Heart right ventricle (tissue), 16 donors: ENCODE measurements at regions of chr1 and their contacts with region 1.

Region 1: GRCh38 chr1:231512147-231512698 is 16.2 kb upstream of the TSNAX start:
- DNase-seq: no peak
- ATAC-seq: no peak
- H3K4me3 ChIP-seq: no peak overlapping the region
- H3K27ac ChIP-seq: no peak overlapping the region
- H3K4me1 ChIP-seq: peaks cover 0 to 27% (median 0%) of the 10 kb centered on the region in 9 donors
- H3K27me3 ChIP-seq: no peaks in the 10 kb centered on the region
- CTCF ChIP-seq: no peak

Region 2: GRCh38 chr1:231351816-231352215 is 160.4 kb before region 1 on chr1:
- intact Hi-C with region 1: no loop called
- DNase-seq: no peak
- ATAC-seq: peak in 2 of 8 donors; percentile 41 to 55
- H3K4me3 ChIP-seq: no peak overlapping the region
- H3K27ac ChIP-seq: peak overlapping the region in 9 of 10 donors; percentile 13 to 70 (median 30)
- H3K4me1 ChIP-seq: peaks cover 0 to 23% (median 5%) of the 10 kb centered on the region in 9 donors
- H3K27me3 ChIP-seq: no peaks in the 10 kb centered on the region
- CTCF ChIP-seq: no peak

Region 3: GRCh38 chr1:231442735-231443134 is 69.5 kb before region 1 on chr1:
- intact Hi-C with region 1: loop called in 1 of 10 experiments (anchors 5 kb)
- DNase-seq: no peak
- ATAC-seq: no peak
- H3K4me3 ChIP-seq: no peak overlapping the region
- H3K27ac ChIP-seq: no peak overlapping the region
- H3K4me1 ChIP-seq: no peaks in the 10 kb centered on the region
- H3K27me3 ChIP-seq: peaks cover 0 to 45% (median 0%) of the 10 kb centered on the region in 7 donors
- CTCF ChIP-seq: no peak